ENCODE measurements at regions of chr9 and their contacts with region 1.

Region 1: GRCh38 chr9:111037381-111038305 is 627 bp downstream of the LPAR1 start:
- DNase-seq: peak in 37 of 42 donors; percentile 5 to 77 (median 44)

Region 2: DNA sequence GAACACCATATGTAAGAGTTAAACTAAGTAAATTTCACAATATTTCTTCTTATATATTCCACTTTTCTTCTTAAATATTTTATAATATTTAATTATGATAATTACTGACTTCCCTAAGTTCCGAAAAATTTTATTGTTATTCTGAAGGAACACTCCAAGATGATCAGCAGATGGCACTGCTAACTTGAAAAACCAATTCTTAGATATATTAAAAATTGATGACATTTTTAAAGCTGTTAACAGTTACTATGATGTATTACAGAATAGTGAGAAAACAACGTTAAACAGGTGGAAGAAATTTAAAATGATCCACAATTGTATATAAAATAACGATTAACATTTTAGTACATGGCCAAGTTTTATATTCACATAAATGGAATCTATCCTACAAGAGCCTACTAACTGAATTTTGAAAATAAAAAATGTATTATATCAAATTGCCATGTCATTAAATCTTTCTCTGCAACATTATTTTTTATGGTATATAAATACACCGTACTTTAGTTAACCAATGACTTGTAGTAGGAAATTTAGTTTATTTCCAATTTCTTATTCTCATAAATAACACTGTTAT is 399.2 kb before region 1 on chr9:
- intact Hi-C with region 1: loop called (anchors 10 kb)
- DNase-seq: no peak

Region 3: DNA sequence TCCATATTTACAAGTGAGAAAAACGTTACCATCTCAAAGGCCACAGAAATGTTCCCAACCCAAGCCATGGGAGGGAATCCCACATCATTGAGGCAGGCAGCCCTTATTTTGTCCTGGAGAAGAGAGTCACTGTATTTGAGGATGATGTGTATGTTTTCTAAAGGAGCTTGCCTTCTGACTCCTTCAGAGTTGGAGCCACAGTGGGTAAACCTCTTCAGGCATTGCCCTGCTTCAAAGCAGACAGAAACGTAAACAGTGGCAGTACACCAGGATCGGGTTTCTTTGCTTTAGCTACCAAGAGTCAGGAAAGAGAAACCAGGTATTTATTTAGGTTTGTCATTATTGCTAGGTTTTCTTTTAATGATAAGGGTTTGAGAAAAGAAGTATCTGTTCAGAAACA is 323.3 kb before region 1 on chr9:
- intact Hi-C with region 1: no loop called
- DNase-seq: no peak

Region 4: DNA sequence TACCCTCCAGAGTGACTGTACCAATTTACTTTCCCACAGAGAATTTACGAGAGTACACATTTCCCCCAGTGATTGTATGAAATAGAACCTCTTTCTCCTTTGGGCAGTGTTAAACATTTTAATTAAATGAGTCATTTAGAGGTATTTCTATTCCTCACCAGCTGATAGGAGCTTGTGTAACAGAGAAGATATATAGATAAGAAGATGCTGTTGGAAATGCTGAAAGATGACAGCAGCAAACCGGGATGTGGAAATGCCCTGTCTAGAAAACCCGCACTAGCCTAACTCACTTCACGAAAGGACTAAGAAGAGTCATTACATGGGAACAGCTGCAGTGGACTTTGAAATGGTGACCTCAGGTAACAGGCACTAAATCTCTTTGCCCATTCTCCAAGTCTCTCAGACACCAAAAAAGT is 67.7 kb before region 1 on chr9:
- intact Hi-C with region 1: loop called (anchors 10 kb)
- DNase-seq: no peak

Region 5: GRCh38 chr9:111023128-111023527 is 14.5 kb before region 1 on chr9:
- intact Hi-C with region 1: no loop called
- DNase-seq: no peak

Region 6: GRCh38 chr9:111294691-111295451 is 257.2 kb after region 1 on chr9:
- intact Hi-C with region 1: loop called (anchors 2 kb)
- DNase-seq: peak in 19 of 42 donors; percentile 16 to 82 (median 55)

Measured in head of caudate nucleus (tissue), 42 donors.